ENCODE measurements at regions of chr15 and their contacts with region 1.

Region 1: GRCh38 chr15:70385711-70386110 is 288.0 kb upstream of the TLE3 start:
- DNase-seq: peak in 1 of 2 donors; percentile 59
- H3K4me3 ChIP-seq: no peak overlapping the region
- CTCF ChIP-seq: no peak
- POLR2A ChIP-seq: no peak

Region 2: GRCh38 chr15:70400766-70401541 is 15.2 kb after region 1 on chr15:
- intact Hi-C with region 1: loop called (anchors 1 kb)
- DNase-seq: peak; percentile 31 to 68
- H3K4me3 ChIP-seq: no peak overlapping the region
- CTCF ChIP-seq: no peak
- POLR2A ChIP-seq: no peak

Measured in lower leg skin (tissue), 4 donors.